ENCODE measurements at regions of chr6 and their contacts with region 1.

Region 1: DNA sequence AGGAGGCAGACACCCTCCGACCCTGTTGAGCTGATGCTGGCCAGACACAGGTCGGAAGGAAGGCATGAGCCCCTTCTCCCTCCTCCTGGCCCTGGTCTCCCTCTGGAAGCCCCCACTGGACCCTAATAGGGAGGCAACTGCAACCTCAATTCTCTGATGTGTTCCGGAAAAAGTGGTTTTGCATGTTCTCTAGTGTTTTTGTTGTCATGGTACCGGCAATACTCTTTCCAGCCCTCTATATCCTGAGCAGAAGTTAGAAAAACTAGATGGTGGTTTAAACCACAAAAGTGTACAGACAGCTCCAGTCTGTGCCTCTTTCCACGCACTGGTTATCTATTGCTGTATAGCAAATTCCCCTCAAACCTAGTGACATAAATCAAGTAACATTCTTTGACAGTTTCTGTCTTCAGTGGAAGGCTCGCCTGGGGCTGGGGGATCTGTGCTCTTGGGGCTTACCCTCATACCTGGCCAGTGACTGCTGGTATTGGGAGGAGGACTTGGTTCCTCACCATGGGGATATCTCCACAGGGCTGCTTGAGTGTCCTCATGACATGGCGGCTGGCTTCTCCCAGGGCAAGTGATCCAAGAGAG is 37.0 kb downstream of the SYTL3 start:
- DNase-seq: no peak
- H3K4me3 Mint-ChIP-seq: no peak overlapping the region
- H3K27ac Mint-ChIP-seq: no peak overlapping the region
- H3K4me1 Mint-ChIP-seq: no peaks in the 10 kb centered on the region
- H3K27me3 Mint-ChIP-seq: no peaks in the 10 kb centered on the region
- CTCF ChIP-seq: no peak

Region 2: GRCh38 chr6:157921685-157922367 is 765.1 kb before region 1 on chr6:
- CTCF ChIA-PET with region 1: no interaction called
- POLR2A ChIA-PET with region 1: no interaction called
- intact Hi-C with region 1: no loop called
- DNase-seq: no peak
- H3K4me3 Mint-ChIP-seq: no peak overlapping the region
- H3K27ac Mint-ChIP-seq: no peak overlapping the region
- H3K4me1 Mint-ChIP-seq: no peaks in the 10 kb centered on the region
- H3K27me3 Mint-ChIP-seq: no peaks in the 10 kb centered on the region
- CTCF ChIP-seq: no peak

Region 3: GRCh38 chr6:158205169-158205944 is 481.5 kb before region 1 on chr6:
- CTCF ChIA-PET with region 1: interaction called, 11 read pairs
- POLR2A ChIA-PET with region 1: interaction called, 5 read pairs
- intact Hi-C with region 1: no loop called
- DNase-seq: no peak
- H3K4me3 Mint-ChIP-seq: no peak overlapping the region
- H3K27ac Mint-ChIP-seq: peak overlapping the region; percentile 74
- H3K4me1 Mint-ChIP-seq: peaks cover 7% of the 10 kb centered on the region
- H3K27me3 Mint-ChIP-seq: no peaks in the 10 kb centered on the region
- CTCF ChIP-seq: peak; percentile 43

Region 4: GRCh38 chr6:158213925-158214674 is 472.8 kb before region 1 on chr6:
- CTCF ChIA-PET with region 1: interaction called, 62 read pairs
- POLR2A ChIA-PET with region 1: interaction called, 14 read pairs
- intact Hi-C with region 1: loop called (anchors 1 kb)
- DNase-seq: peak; percentile 80
- H3K4me3 Mint-ChIP-seq: no peak overlapping the region
- H3K27ac Mint-ChIP-seq: no peak overlapping the region
- H3K4me1 Mint-ChIP-seq: peaks cover 10% of the 10 kb centered on the region
- H3K27me3 Mint-ChIP-seq: no peaks in the 10 kb centered on the region
- CTCF ChIP-seq: peak; percentile 75

Region 5: DNA sequence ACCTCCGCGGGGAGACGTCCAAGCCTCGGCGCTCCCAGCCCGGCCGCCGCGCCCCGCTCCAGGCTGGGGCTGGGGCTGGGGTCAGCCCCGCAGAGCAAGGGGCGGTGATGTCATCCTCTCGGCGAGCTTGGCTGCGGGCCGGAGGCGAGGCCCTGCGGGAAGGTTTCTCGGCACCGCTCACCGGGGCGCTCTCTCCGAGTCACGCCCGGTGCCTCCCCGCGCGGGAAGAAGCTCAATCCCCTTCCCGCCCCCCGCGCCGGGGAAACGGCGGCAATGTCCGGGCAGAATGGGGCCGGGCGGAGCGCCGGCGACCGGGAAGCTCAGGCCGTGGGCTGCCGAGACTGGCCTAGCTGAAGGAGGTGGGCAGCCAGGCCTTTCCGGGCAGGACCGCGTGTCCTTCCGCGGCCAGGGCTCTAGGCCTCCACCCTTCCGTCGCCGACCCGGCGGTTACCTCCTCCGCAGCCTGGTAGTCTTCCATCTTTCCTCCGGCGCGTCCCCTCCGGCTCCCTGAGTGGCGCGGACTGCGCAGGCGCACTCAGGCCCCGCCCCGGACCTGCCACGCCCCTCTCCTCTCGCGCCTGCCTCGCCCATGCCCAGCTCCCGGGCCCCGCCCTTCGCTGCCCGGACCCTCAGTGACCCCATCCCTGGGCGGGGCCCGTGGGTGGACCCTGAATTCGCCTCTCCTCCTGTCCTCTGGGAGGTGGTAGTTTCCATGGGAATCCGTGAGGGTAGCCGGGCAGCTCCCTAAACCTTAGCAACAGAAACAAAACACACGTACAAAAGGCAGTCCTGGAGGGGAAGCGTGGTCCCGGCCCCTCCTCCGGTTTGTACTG is 42.4 kb before region 1 on chr6 and contains the start of gene DYNLT1:
- CTCF ChIA-PET with region 1: interaction called, 36 read pairs
- POLR2A ChIA-PET with region 1: interaction called, 21 read pairs
- intact Hi-C with region 1: loop called (anchors 1 kb)
- DNase-seq: peak; percentile 90
- H3K4me3 Mint-ChIP-seq: peak within 1 kb of the TSS; percentile 93
- H3K27ac Mint-ChIP-seq: peak within 1 kb of the TSS; percentile 94
- H3K4me1 Mint-ChIP-seq: peaks cover 55% of the 10 kb centered on the region
- H3K27me3 Mint-ChIP-seq: no peaks in the 10 kb centered on the region
- CTCF ChIP-seq: no peak
- total RNA-seq, gene DYNLT1: 122 and 156 TPM in 2 replicates

Region 6: GRCh38 chr6:158660333-158660754 is 26.5 kb before region 1 on chr6:
- CTCF ChIA-PET with region 1: interaction called, 38 read pairs
- POLR2A ChIA-PET with region 1: interaction called, 4 read pairs
- intact Hi-C with region 1: loop called (anchors 1 kb)
- DNase-seq: peak; percentile 47
- H3K4me3 Mint-ChIP-seq: no peak overlapping the region
- H3K27ac Mint-ChIP-seq: no peak overlapping the region
- H3K4me1 Mint-ChIP-seq: peaks cover 2% of the 10 kb centered on the region
- H3K27me3 Mint-ChIP-seq: no peaks in the 10 kb centered on the region
- CTCF ChIP-seq: peak; percentile 35

Region 7: GRCh38 chr6:158669145-158670035 is 17.5 kb before region 1 on chr6:
- CTCF ChIA-PET with region 1: interaction called, 14 read pairs
- POLR2A ChIA-PET with region 1: no interaction called
- intact Hi-C with region 1: no loop called
- DNase-seq: peak; percentile 26
- H3K4me3 Mint-ChIP-seq: no peak overlapping the region
- H3K27ac Mint-ChIP-seq: no peak overlapping the region
- H3K4me1 Mint-ChIP-seq: peaks cover 13% of the 10 kb centered on the region
- H3K27me3 Mint-ChIP-seq: no peaks in the 10 kb centered on the region
- CTCF ChIP-seq: no peak

Measured in MCF 10A (cell line).